ENCODE measurements at regions of chr18 and their contacts with region 1.

Region 1: DNA sequence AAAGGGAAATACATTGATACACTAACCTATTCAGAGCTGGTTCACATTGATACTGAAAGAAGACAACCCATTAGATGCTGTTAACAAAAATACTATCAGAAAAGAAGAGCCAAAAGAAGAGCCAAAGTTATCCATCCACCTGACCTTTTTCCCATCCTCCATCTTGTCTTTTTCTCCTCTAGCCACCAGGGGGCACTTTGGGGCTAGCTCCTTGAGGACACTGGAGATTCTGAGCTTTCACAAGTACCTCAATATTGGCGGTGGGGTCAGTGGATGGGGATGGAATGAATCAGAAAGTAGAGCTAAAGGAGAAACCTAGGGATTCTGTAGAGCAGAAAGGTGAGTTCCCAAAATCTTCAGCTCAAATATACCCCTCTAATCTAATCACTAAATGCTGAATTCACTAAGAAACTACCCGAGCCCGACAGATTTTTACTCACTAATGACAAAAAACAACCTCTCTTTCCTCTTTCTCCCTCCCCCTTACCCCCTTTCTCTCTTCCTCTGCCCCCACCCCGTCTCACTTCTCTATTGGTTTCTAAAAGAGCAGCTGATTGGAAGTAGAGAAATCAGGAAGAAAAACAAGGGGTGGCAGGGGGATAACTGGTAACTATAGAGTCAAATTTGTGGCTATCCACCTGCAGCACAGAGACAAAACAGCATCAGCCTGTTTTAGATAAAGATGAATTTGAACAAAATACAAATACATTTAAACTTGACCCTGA is 203.3 kb downstream of the TCF4 start:
- DNase-seq: peak; percentile 65
- ATAC-seq: peak; percentile 84
- H3K4me3 Mint-ChIP-seq: no peak overlapping the region
- H3K27ac Mint-ChIP-seq: peak overlapping the region; percentile 64; the same call in 1 of the 2 replicates
- H3K4me1 Mint-ChIP-seq: peaks cover 36% of the 10 kb centered on the region
- H3K27me3 Mint-ChIP-seq: no peaks in the 10 kb centered on the region
- CTCF ChIP-seq: peak; percentile 74

Region 2: DNA sequence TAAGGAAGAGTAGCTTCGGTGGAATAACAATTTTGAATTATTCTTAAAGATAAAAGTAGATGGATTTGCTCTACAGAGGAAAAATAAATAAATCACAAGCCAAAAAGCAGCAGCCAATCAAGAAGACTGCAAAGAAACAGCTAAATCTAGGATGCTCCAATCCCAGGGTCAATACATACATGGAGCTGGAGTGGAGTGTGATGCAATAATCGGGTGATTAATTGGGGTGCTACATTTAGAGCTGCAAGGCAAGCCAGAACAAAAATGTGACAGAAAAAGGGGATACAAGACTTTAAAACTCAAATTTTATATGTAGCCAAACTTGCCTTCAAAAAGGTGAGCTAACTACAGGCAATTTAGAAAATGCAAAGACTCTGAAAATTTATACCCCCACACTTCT is 12.5 kb before region 1 on chr18:
- CTCF ChIA-PET with region 1: interaction called, 24 read pairs
- POLR2A ChIA-PET with region 1: no interaction called
- DNase-seq: no peak
- ATAC-seq: no peak
- H3K4me3 Mint-ChIP-seq: no peak overlapping the region
- H3K27ac Mint-ChIP-seq: no peak overlapping the region
- H3K4me1 Mint-ChIP-seq: peaks cover 23% of the 10 kb centered on the region
- H3K27me3 Mint-ChIP-seq: no peaks in the 10 kb centered on the region
- CTCF ChIP-seq: no peak

Region 3: GRCh38 chr18:55401638-55402191 is 17.0 kb after region 1 on chr18:
- CTCF ChIA-PET with region 1: interaction called, 21 read pairs
- POLR2A ChIA-PET with region 1: interaction called, 3 read pairs
- DNase-seq: peak; percentile 56
- ATAC-seq: peak; percentile 88
- H3K4me3 Mint-ChIP-seq: peak overlapping the region; percentile 35
- H3K27ac Mint-ChIP-seq: peak overlapping the region; percentile 96
- H3K4me1 Mint-ChIP-seq: peaks cover 86% of the 10 kb centered on the region
- H3K27me3 Mint-ChIP-seq: no peaks in the 10 kb centered on the region
- CTCF ChIP-seq: no peak

Region 4: DNA sequence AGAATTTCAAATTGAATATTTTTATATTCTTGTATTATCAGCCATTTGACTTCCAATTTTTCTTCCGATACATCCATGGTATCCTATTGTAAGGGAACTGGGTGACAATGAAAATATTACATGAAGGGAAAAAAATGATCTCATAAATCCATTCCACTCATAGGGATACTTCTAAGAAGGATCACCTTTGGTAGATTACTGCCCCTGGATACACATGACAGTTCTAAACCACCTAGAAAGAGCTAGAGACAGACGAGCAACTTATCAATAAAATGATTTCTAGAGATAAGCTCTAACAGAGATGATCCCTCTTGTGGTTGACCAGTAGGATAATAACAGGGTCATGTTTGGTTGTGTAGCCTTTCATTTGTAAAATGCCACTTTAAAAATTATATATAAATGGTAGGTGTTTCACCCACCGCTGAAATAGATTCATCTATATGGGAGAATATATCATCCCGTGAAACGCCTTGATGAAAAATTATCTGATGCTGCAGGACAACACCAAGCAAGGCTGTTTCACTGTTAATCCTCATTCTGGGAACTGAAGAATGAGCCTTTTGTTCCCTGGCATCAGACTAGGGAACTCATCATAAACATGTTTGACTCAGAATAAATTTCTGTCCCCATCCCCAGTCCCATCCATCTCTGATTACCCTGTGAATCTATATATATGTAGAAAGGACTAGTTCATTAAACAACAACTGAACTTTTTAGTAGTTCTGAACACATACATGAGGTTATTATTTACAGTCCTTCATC is 23.2 kb after region 1 on chr18:
- CTCF ChIA-PET with region 1: interaction called, 13 read pairs
- POLR2A ChIA-PET with region 1: no interaction called
- DNase-seq: no peak
- ATAC-seq: no peak
- H3K4me3 Mint-ChIP-seq: no peak overlapping the region
- H3K27ac Mint-ChIP-seq: peak overlapping the region; percentile 58
- H3K4me1 Mint-ChIP-seq: peaks cover 79% of the 10 kb centered on the region
- H3K27me3 Mint-ChIP-seq: no peaks in the 10 kb centered on the region
- CTCF ChIP-seq: no peak

Region 5: GRCh38 chr18:55522011-55522410 is 137.3 kb after region 1 on chr18:
- CTCF ChIA-PET with region 1: no interaction called
- POLR2A ChIA-PET with region 1: no interaction called
- DNase-seq: peak; percentile 84
- ATAC-seq: peak; percentile 74
- H3K4me3 Mint-ChIP-seq: no peak overlapping the region
- H3K27ac Mint-ChIP-seq: peak overlapping the region; percentile 33; the same call in 1 of the 2 replicates
- H3K4me1 Mint-ChIP-seq: peaks cover 55% of the 10 kb centered on the region
- H3K27me3 Mint-ChIP-seq: no peaks in the 10 kb centered on the region
- CTCF ChIP-seq: peak; percentile 55; the same call in 1 of the 2 replicates

Region 6: DNA sequence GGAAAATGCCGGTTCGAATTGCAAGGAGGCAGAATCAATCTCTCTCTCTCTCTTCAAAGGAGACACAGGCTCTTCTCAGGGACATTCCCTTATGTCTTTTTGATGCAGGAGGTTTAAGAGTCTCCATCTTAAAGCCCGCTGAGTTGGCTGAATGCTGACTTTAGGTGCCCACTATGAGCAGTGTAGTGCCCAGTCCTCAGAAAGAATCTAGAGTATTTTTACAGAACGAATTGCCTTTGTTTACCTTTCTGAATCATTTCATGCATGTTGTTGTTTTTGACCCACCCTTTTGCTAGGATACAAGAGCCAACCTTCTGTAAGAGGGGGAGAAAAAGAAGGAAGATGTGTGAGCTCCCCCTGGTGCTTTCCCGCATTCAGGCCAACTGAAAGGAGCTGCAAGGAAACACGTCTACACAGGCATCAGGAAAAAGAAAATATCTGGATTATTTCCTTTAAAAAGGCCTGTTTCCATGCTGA is 396.8 kb after region 1 on chr18:
- CTCF ChIA-PET with region 1: interaction called, 11 read pairs
- POLR2A ChIA-PET with region 1: no interaction called
- DNase-seq: peak; percentile 70
- ATAC-seq: peak; percentile 65
- H3K4me3 Mint-ChIP-seq: peak overlapping the region; percentile 63
- H3K27ac Mint-ChIP-seq: peak overlapping the region; percentile 76
- H3K4me1 Mint-ChIP-seq: peaks cover 46% of the 10 kb centered on the region
- H3K27me3 Mint-ChIP-seq: 0 out of 2 replicates have a peak, but pooled peaks cover 5% of the 10 kb centered on the region
- CTCF ChIP-seq: peak; percentile 51; the same call in 1 of the 2 replicates

Measured in WTC11 (cell line).